ENCODE measurements at regions of chr7 and their contacts with region 1.

Region 1: GRCh38 chr7:100049441-100050311 is at the start of gene ZSCAN21:
- DNase-seq: peak; percentile 93
- H3K4me3 ChIP-seq: peak within 1 kb of the TSS; percentile 65 to 94 (median 90)
- H3K27ac ChIP-seq: peak within 1 kb of the TSS; percentile 90 to 98 (median 98)
- H3K4me1 ChIP-seq: peaks cover 0 to 32% (median 20%) of the 10 kb centered on the region in 4 donors
- H3K27me3 ChIP-seq: no peaks in the 10 kb centered on the region
- CTCF ChIP-seq: no peak
- EP300 ChIP-seq: peak in 2 of 4 donors; percentile 28 to 35
- POLR2A ChIP-seq: peak; percentile 80 to 85
- total RNA-seq, gene ZSCAN21: 14.7 to 21.8 (median 17.4) TPM

Region 2: GRCh38 chr7:99997545-99998137 is 52.0 kb before region 1 on chr7:
- intact Hi-C with region 1: loop called (anchors 1 kb)
- DNase-seq: peak; percentile 78
- H3K4me3 ChIP-seq: peak overlapping the region; percentile 43 to 56 (median 50)
- H3K27ac ChIP-seq: peak overlapping the region; percentile 63 to 80 (median 72)
- H3K4me1 ChIP-seq: peaks cover 0 to 20% (median 6%) of the 10 kb centered on the region in 4 donors
- H3K27me3 ChIP-seq: no peaks in the 10 kb centered on the region
- CTCF ChIP-seq: peak in 3 of 4 experiments; percentile 32 to 53 (median 47)
- EP300 ChIP-seq: no peak
- POLR2A ChIP-seq: peak; percentile 36 to 37

Region 3: DNA sequence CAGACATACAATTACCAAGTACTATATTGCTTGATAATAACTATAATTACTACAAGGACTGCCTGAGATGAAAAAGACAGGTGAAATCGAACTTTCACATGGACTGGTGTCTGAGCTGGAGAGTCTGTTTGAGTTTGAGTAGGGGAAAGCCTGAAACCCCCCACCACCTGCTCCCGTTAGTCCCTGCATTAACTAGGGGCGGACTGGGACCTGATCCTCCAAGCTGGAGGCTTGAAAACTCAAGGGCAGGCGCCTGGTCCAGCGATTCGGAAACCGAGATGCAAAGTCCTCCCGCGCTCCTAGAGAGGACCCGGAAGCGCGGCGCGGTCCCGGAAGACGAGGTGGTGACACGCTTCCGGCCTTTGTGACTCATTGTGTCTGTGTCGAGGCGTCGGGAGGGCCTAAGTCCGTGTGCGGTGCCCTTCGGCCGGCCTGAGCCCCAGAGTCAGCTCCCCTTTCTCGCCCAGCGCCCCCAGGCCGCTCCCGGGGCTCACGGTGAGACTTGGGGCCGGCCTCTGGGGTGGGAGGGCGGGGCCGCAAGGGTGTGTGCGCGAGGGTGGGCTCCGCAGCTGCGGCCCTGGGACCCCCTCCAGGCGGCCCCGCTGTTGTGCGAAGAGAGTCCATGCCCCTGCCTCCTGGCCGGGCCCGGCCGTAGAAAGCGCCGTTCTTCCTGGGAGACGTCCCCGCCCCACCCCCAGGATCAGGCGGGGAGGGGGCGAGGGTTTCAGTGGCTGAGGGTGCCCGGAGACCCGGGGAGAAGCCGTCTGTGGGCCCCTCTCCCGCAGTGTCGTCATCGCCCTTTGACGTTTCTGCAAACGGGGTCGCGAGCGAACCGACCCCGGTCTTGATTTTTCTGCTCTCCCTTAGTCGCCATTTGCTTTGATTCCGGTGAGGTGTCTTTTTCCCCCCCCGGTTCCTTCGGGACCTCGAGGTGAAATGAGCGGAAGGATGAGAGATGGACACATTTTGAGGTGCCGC is 34.2 kb before region 1 on chr7 and contains the start of gene ZKSCAN1:
- intact Hi-C with region 1: loop called (anchors 5 kb)
- DNase-seq: peak; percentile 95
- H3K4me3 ChIP-seq: peak within 1 kb of the TSS; percentile 79 to 100 (median 100)
- H3K27ac ChIP-seq: peak within 1 kb of the TSS; percentile 98 to 100 (median 100)
- H3K4me1 ChIP-seq: peaks cover 0 to 50% (median 40%) of the 10 kb centered on the region in 4 donors
- H3K27me3 ChIP-seq: no peaks in the 10 kb centered on the region
- CTCF ChIP-seq: no peak
- EP300 ChIP-seq: no peak
- POLR2A ChIP-seq: peak; percentile 69 to 78
- total RNA-seq, gene ZKSCAN1: 27.8 to 32.7 (median 31.6) TPM

Region 4: DNA sequence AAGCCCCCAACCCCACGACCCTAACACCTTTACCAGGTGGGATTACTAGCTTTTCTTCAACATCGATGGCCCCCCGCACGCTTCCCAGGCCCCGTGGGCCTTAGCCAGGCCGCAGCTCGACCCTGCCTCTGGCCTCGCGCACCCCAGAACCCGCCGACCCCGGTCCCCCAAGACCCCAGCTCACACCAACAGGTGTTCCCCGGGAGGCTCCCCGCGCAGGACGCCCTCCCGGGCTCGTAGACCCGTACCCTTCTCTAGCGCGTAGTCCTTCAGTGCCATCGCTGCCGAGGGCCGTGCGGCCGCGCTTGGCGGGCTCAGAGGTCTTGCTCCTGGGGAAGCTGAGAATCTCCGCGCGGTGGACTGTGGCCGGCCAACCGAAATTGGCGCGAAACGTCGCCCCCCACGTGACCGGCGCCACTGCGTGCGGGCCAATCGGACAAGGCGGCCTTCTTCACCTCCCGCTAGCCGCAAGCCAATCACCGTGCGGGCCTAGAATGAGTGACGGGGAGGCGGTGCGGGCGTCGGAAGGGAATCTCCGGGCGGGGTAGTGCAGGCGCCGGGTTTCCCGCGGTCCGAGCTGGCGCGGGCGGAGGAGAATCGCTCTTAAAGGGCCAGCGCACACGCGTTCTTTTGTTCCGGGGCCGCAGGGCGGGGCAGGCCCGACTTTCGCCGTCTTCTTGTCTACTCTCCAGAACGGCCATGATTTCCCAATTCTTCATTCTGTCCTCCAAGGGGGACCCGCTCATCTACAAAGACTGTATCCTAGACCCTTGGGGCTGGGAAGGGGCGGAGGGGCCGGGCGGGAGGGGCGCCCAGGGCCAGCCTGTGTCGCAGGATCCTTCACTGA is 51.6 kb after region 1 on chr7 and contains the starts of genes AP4M1 and MCM7:
- intact Hi-C with region 1: loop called (anchors 1 kb)
- DNase-seq: peak; percentile 100
- H3K4me3 ChIP-seq: peak within 1 kb of the TSS; percentile 66 to 89 (median 82)
- H3K27ac ChIP-seq: peak within 1 kb of the TSS; percentile 95 to 99 (median 97)
- H3K4me1 ChIP-seq: peaks cover 0 to 41% (median 25%) of the 10 kb centered on the region in 4 donors
- H3K27me3 ChIP-seq: no peaks in the 10 kb centered on the region
- CTCF ChIP-seq: no peak
- EP300 ChIP-seq: no peak
- POLR2A ChIP-seq: no peak
- total RNA-seq, gene AP4M1: 18.1 to 26.6 (median 20.8) TPM
- total RNA-seq, gene MCM7: 30.7 to 43.6 (median 37.4) TPM